CD8-positive, alpha-beta T cell (primary cell): ENCODE measurements at regions of chrX and their contacts with region 1.

Region 1: GRCh38 chrX:100819837-100820666 is at the start of gene CSTF2:
- DNase-seq: peak; percentile 53 to 90 (median 78)
- ATAC-seq: peak; percentile 95
- H3K4me3 ChIP-seq: peak within 1 kb of the TSS; percentile 65 to 83
- H3K4me3 Mint-ChIP-seq: peak within 1 kb of the TSS; percentile 90
- H3K27ac ChIP-seq: peak within 1 kb of the TSS; percentile 87 to 92
- H3K27ac Mint-ChIP-seq: peak within 1 kb of the TSS; percentile 90
- H3K4me1 ChIP-seq: no peaks in the 10 kb centered on the region
- H3K4me1 Mint-ChIP-seq: peaks cover 18% of the 10 kb centered on the region
- H3K27me3 ChIP-seq: no peaks in the 10 kb centered on the region
- H3K27me3 Mint-ChIP-seq: peaks cover 4% of the 10 kb centered on the region
- CTCF ChIP-seq: no peak
- total RNA-seq, gene CSTF2: 10.1 to 10.6 TPM

Region 2: GRCh38 chrX:100928660-100929613 is 108.9 kb after region 1 on chrX and contains the start of gene XKRX:
- CTCF ChIA-PET with region 1: no interaction called
- POLR2A ChIA-PET with region 1: no interaction called
- intact Hi-C with region 1: loop called in 1 of 2 experiments (anchors 5 kb)
- DNase-seq: peak; percentile 4 to 67 (median 37)
- ATAC-seq: peak; percentile 86
- H3K4me3 ChIP-seq: peak within 1 kb of the TSS; percentile 50 to 65
- H3K4me3 Mint-ChIP-seq: peak within 1 kb of the TSS; percentile 95
- H3K27ac ChIP-seq: peak within 1 kb of the TSS in 1 of 2 experiments; percentile 30
- H3K27ac Mint-ChIP-seq: peak within 1 kb of the TSS; percentile 85
- H3K4me1 ChIP-seq: peaks cover 12% of the 10 kb centered on the region
- H3K4me1 Mint-ChIP-seq: peaks cover 47% of the 10 kb centered on the region
- H3K27me3 ChIP-seq: no peaks in the 10 kb centered on the region
- H3K27me3 Mint-ChIP-seq: peaks cover 6% of the 10 kb centered on the region
- CTCF ChIP-seq: no peak
- total RNA-seq, gene XKRX: 0.87 to 0.94 TPM

Region 3: GRCh38 chrX:101097546-101098453 is 277.7 kb after region 1 on chrX and contains the start of gene CENPI:
- CTCF ChIA-PET with region 1: no interaction called
- POLR2A ChIA-PET with region 1: interaction called, 3 read pairs
- intact Hi-C with region 1: loop called (anchors 1 to 5 kb)
- DNase-seq: peak; percentile 83 to 95 (median 90)
- ATAC-seq: peak; percentile 99
- H3K4me3 ChIP-seq: peak within 1 kb of the TSS; percentile 50 to 69
- H3K4me3 Mint-ChIP-seq: peak within 1 kb of the TSS; percentile 91
- H3K27ac ChIP-seq: peak within 1 kb of the TSS; percentile 80 to 88
- H3K27ac Mint-ChIP-seq: peak within 1 kb of the TSS; percentile 96
- H3K4me1 ChIP-seq: peaks cover 10% of the 10 kb centered on the region
- H3K4me1 Mint-ChIP-seq: peaks cover 13% of the 10 kb centered on the region
- H3K27me3 ChIP-seq: no peaks in the 10 kb centered on the region
- H3K27me3 Mint-ChIP-seq: no peaks in the 10 kb centered on the region
- CTCF ChIP-seq: no peak
- total RNA-seq, gene CENPI: 0.35 to 0.44 TPM